AG04449 (cell line): ENCODE measurements at regions of chr2 and their contacts with region 1.

Region 1: DNA sequence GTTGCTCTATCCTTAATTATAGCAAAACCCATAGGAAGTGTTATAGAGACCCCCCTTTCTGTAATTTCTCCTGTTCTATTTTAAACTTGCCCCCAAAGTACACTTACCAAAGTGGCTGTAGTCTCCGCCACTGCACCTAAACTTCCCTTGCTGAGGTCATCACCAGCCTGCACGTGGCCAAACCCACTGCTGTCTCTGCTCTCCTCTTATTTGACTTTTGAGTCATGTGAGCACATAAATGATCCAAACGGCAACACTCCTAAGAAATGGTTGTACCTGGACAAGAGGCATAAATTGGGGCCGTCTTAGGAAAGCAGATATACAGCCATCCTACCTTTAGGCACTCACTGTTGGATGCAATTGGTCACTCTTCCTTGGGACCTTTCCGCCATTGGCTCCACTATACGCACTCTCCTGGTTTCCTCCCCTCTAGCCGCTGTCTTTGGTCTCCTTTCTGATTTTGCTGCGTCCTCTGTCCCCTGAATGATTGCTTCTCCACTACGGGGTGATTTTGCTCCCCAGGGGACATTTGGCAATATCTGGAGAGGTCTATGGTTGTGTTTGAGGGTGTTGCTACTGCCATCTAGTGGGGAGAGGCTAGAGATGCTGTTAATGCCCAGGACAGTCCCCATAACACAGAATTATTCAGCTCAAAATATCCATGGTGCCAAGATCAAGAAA is 19.2 kb upstream of the IL36G start:
- DNase-seq: no peak
- H3K4me3 ChIP-seq: no peak overlapping the region
- CTCF ChIP-seq: peak; percentile 81

Region 2: DNA sequence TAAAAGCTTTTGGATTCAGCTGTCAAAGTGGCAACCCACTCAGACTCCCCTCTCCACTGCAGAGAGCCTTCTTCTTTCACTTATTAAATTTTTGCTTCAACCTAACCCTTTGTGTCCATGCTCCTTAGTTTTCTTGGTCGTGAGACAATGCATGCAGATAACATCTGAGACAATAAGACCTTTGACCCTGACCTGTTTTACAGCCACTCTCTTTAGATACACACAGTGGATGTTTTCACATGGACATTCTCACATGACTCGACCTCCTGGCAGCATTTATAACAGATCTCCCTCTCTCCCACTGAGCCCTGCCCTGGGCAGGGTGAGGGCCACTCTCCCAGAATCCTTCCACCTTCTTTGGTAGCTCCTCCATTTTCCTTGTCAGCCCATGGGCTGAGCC is 11.2 kb before region 1 on chr2:
- CTCF ChIA-PET with region 1: interaction called, 47 read pairs
- POLR2A ChIA-PET with region 1: no interaction called
- DNase-seq: no peak
- H3K4me3 ChIP-seq: no peak overlapping the region
- CTCF ChIP-seq: no peak

Region 3: DNA sequence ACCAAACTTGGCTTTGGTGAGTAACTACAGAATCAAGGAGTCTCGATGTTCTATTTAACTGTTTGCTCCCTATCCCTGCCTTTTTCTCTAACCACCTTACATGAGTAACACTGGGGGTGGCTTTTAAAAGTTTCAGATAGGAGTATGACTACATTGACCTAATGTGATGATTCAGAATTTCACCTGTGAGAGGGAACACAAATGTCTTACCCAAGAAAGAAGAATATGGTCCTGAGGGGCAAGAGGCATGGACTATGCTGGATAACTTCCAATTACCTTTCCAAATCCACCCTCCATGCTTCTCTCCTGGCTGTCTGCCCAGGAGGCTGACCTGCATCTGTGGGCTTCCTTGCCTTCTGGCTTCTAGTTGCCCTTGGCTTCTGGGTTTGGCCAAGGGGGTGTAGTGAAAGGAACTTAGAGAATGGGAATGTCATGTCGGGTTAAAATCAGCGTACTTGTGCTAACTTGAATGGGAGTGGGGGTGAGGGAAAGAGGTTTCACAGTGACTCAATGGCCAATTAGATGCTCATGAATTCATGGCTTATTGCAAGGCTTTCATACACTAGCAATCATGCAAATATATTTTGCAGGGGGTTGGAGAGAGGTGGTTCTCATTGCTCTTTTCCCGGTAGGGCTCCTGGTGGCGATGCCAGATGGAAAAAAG is 14.0 kb after region 1 on chr2:
- CTCF ChIA-PET with region 1: interaction called, 18 read pairs
- POLR2A ChIA-PET with region 1: no interaction called
- DNase-seq: no peak
- H3K4me3 ChIP-seq: no peak overlapping the region
- CTCF ChIP-seq: no peak